ENCODE measurements at regions of chr10 and their contacts with region 1.

Region 1: GRCh38 chr10:112721080-112721698 is 228.9 kb upstream of the TCF7L2 start:
- DNase-seq: peak in 1 of 2 experiments; percentile 43
- H3K4me3 ChIP-seq: no peak overlapping the region
- H3K27ac ChIP-seq: no peak overlapping the region
- H3K4me1 ChIP-seq: peaks cover 0 to 7% (median 2%) of the 10 kb centered on the region in 4 experiments; a peak in 3 of 7 replicates
- H3K27me3 ChIP-seq: no peaks in the 10 kb centered on the region
- CTCF ChIP-seq: peak in 2 of 3 experiments; percentile 30 to 79; a peak in 2 of 4 replicates
- EP300 ChIP-seq: no peak
- POLR2A ChIP-seq: no peak
- RAD21 ChIP-seq: peak; percentile 58 to 72

Region 2: DNA sequence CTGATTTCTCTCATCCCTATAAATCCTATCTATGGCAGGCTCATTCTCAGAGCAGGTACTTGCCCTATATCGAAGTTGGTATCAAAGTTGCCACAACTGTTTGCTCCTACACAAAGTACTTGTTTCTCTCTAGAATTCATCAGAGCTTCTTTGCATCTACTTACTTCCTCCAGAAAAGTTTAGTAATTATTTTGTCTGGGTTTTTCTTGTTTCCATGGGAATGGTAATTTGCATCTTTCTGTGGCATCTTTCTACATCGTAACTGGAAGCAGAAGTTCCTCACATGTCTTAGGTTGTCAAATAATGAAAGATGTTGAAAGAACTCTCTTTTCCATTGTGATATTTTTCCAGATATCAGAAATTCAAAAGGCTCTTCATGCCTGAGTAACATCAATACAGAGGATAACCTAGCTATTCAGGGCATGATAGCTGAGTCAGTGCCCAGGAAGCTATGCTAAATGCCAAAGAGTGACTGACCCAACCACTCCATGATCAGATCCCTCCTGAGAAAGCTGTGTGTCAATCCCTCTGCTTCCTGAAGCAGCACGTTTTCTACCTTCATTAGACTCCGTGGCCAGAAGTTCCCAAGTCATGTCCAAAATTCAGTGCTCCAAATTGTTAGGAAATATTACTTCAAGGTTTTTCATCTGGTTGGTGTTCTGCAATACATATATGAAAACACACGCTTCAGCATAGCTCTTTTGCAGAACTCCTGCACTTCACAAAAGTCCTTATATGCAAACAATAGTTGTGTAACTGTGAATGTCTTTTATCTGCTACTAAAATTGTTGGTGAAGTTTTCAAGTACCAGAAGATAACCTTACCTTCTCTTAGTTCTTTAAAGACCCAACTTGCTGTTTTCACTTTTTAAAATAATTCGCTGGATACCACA is 57.7 kb before region 1 on chr10:
- CTCF ChIA-PET with region 1: no interaction called
- POLR2A ChIA-PET with region 1: no interaction called
- DNase-seq: no peak
- H3K4me3 ChIP-seq: no peak overlapping the region
- H3K27ac ChIP-seq: no peak overlapping the region
- H3K4me1 ChIP-seq: 0 out of 7 replicates have a peak, but pooled peaks cover 0 to 4% (median 0%) of the 10 kb centered on the region in 4 experiments
- H3K27me3 ChIP-seq: no peaks in the 10 kb centered on the region
- CTCF ChIP-seq: no peak
- EP300 ChIP-seq: no peak
- POLR2A ChIP-seq: no peak
- RAD21 ChIP-seq: no peak

Region 3: DNA sequence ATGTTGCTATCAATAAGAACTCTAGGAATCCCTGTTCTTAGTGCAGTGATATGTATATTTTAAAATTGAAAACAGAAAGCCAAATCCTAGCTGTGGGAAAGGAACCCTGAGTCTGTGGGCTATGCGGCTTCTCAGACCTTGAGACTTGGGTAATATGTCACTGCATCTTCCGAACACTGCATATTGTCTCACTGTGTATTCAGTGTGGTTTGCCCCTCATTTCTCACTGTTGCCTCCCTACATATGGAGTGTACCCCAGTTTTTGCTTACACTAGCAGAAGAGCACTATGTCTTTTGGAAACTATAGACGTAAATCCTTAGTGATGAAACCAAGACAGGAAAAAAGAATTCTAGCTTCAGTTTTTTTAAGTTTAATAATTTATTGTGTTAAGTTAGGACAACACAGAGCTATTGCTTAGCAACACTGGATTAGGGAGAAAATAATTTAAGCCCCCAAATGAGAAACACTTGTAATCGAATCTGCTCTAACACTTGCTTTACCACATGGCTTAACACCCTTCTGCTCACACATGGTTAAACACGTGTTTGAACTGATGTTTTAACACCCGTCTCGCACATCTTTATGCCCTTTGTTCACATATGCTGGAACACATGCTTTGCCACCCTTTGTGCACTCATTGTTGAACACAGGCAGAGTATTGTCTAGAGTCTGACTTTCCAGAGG is 22.9 kb before region 1 on chr10:
- CTCF ChIA-PET with region 1: interaction called, 40 read pairs
- POLR2A ChIA-PET with region 1: no interaction called
- DNase-seq: peak in 1 of 2 experiments; percentile 11
- H3K4me3 ChIP-seq: no peak overlapping the region
- H3K27ac ChIP-seq: no peak overlapping the region; the same call in 1 of the 2 replicates
- H3K4me1 ChIP-seq: no peaks in the 10 kb centered on the region
- H3K27me3 ChIP-seq: no peaks in the 10 kb centered on the region
- CTCF ChIP-seq: no peak
- EP300 ChIP-seq: no peak
- POLR2A ChIP-seq: no peak
- RAD21 ChIP-seq: no peak

Region 4: DNA sequence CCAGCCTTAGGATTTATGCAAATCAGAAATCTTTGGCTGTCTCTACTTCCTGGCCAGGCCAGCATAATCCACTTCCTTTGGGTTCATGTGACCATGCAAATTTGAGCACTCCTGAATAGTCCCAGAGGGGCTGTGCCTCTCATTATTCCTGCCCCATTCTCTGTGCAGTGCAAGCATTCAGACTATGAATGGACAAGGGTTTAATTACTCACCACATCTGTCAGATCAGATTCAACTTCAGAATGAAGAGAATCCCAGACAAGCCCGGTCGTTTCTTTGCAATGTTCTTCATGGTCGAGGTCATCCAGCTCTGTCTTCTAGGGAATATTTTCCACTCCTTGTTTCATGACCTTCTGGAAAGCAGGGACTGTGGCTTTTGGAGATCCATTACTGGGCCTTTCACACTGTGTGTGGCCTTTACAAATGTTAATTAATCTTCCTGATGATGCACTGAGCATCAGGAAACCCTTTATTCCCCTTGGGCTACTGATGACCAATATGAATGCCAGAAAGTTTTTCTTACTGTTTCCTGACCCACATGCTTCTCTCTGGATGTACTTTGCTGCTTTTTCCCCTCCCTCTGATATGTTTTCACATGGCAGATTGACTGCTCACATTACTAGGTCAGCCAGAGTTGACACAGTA is 11.2 kb after region 1 on chr10:
- CTCF ChIA-PET with region 1: interaction called, 21 read pairs
- POLR2A ChIA-PET with region 1: no interaction called
- DNase-seq: peak in 1 of 2 experiments; percentile 46
- H3K4me3 ChIP-seq: peak overlapping the region in 2 of 4 experiments; percentile 7 to 13; a peak in 2 of 8 replicates
- H3K27ac ChIP-seq: peak overlapping the region; percentile 56
- H3K4me1 ChIP-seq: peaks cover 9 to 20% (median 14%) of the 10 kb centered on the region in 4 experiments
- H3K27me3 ChIP-seq: no peaks in the 10 kb centered on the region
- CTCF ChIP-seq: no peak
- EP300 ChIP-seq: no peak
- POLR2A ChIP-seq: no peak
- RAD21 ChIP-seq: no peak

Region 5: DNA sequence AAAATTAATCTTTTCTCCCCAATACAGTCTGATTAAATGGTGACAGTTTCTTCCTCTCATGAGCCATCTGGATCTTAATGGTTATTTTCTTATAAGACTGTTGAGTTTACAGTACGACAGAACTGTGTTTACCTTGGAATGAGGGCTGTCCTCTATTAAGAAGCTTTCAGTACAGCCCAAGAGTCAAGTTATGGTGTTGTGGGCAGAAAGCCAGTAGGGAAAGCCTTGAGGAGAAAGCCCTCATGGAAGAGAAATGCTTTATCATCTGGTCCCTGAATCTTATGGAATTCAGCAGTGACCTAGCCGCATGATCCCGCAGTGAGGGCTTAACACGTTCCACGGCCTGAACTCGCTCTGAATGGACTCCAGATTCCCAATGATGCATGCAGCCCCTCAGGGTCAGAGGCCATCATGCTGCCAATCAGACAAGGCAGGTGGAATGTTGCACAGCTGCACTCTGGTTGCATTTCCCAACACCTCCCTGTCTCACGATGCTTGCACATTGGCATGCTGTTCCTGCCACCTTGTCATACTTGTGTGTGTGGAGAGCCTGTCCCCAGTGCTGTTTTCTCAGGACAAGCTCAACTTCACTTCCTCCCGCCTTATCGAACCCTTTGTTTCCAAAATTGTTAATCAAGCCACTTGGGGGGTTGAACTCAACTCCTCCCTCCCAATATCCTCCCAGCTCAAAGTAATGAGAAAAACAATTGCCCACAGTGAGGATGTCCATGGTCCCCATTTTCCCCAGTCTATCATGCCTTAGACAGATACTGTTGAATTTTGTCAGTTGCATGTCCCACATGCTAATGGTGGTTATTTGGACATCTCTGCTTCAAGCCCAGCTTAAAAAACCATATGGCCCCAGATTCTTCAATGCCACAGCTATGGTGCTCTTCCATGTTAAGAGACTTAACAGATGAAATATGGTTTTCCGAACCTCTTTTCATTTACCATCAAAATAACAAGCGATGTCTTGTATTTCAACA is 17.7 kb after region 1 on chr10:
- CTCF ChIA-PET with region 1: interaction called, 15 read pairs
- POLR2A ChIA-PET with region 1: interaction called, 3 read pairs
- DNase-seq: no peak
- H3K4me3 ChIP-seq: no peak overlapping the region
- H3K27ac ChIP-seq: no peak overlapping the region; the same call in 1 of the 2 replicates
- H3K4me1 ChIP-seq: peaks cover 0 to 7% (median 3%) of the 10 kb centered on the region in 4 experiments; a peak in 5 of 7 replicates
- H3K27me3 ChIP-seq: no peaks in the 10 kb centered on the region
- CTCF ChIP-seq: no peak
- EP300 ChIP-seq: no peak
- POLR2A ChIP-seq: no peak
- RAD21 ChIP-seq: no peak

Region 6: GRCh38 chr10:112753961-112754411 is 32.8 kb after region 1 on chr10:
- CTCF ChIA-PET with region 1: interaction called, 17 read pairs
- POLR2A ChIA-PET with region 1: no interaction called
- DNase-seq: no peak
- H3K4me3 ChIP-seq: no peak overlapping the region
- H3K27ac ChIP-seq: no peak overlapping the region
- H3K4me1 ChIP-seq: no peaks in the 10 kb centered on the region; a peak in 1 of 7 replicates
- H3K27me3 ChIP-seq: no peaks in the 10 kb centered on the region
- CTCF ChIP-seq: no peak
- EP300 ChIP-seq: no peak
- POLR2A ChIP-seq: no peak
- RAD21 ChIP-seq: no peak

Region 7: GRCh38 chr10:112778579-112778978 is 57.4 kb after region 1 on chr10:
- CTCF ChIA-PET with region 1: interaction called, 18 read pairs
- POLR2A ChIA-PET with region 1: no interaction called
- DNase-seq: no peak
- H3K4me3 ChIP-seq: no peak overlapping the region
- H3K27ac ChIP-seq: no peak overlapping the region
- H3K4me1 ChIP-seq: peaks cover 0 to 6% (median 1%) of the 10 kb centered on the region in 4 experiments; a peak in 3 of 7 replicates
- H3K27me3 ChIP-seq: no peaks in the 10 kb centered on the region
- CTCF ChIP-seq: no peak
- EP300 ChIP-seq: no peak
- POLR2A ChIP-seq: no peak
- RAD21 ChIP-seq: no peak

Region 8: DNA sequence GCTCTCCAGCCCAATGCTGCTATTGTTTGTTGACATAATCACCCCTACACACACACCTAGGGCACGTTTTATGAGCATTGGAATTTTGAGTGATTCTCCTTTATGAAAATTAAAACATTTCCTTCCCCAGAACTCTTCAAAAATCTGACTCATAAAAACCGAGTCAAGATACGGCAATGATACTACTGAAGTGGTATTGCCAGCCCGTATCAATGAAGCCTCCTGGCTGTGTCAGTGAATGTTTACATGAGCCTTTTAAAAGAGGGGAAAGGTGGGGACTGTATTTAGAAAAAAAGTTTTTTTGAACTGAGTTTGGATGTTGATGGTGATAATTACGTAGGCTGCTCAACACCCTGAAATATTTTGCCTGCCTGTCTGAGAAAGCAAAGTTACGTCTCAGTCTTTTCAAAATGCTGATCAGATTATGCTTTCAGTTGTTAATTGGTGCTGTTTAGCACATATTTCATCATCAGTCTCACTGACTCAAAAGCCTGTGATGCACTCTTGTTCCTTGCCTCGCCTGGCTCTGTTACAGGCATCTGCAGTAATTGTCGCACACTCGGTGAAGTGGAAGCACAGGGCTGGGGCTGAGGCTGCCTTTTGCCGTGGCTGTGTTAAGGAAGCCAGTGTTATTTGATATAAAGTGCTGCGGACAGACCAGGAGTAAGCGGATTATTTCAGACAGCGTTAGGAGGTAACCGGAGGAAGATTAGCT is 71.5 kb after region 1 on chr10:
- CTCF ChIA-PET with region 1: no interaction called
- POLR2A ChIA-PET with region 1: no interaction called
- DNase-seq: peak in 1 of 2 experiments; percentile 43
- H3K4me3 ChIP-seq: no peak overlapping the region
- H3K27ac ChIP-seq: no peak overlapping the region
- H3K4me1 ChIP-seq: peaks cover 0 to 17% (median 2%) of the 10 kb centered on the region in 4 experiments; a peak in 4 of 7 replicates
- H3K27me3 ChIP-seq: no peaks in the 10 kb centered on the region
- CTCF ChIP-seq: no peak
- EP300 ChIP-seq: no peak
- POLR2A ChIP-seq: no peak
- RAD21 ChIP-seq: no peak

Region 9: DNA sequence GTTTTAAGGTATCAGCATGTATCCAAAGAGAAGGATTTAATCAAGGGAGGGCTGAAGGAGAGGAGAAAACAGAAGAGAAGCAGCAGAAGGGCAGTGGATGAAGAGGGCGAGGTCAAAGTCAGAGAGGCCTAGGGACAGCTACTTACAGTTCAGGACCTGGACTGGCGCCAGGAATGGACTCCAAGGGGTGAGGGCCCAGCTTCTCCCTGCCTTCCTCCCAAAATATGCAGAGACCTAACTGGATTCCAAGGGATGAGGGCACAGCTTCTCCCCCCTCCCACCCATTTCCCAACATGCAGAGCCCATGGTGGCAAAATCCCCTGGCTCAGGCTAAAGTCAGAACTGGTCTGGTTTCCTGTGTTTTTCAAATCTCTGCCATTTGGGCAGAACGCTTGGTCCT is 225.5 kb after region 1 on chr10:
- CTCF ChIA-PET with region 1: interaction called, 12 read pairs
- POLR2A ChIA-PET with region 1: no interaction called
- DNase-seq: no peak
- H3K4me3 ChIP-seq: no peak overlapping the region
- H3K27ac ChIP-seq: no peak overlapping the region
- H3K4me1 ChIP-seq: peaks cover 0 to 10% (median 4%) of the 10 kb centered on the region in 4 experiments; a peak in 4 of 7 replicates
- H3K27me3 ChIP-seq: no peaks in the 10 kb centered on the region
- CTCF ChIP-seq: no peak
- EP300 ChIP-seq: no peak
- POLR2A ChIP-seq: no peak
- RAD21 ChIP-seq: no peak